Caco-2 (cell line): ENCODE measurements at regions of chr3 and their contacts with region 1.

Region 1: GRCh38 chr3:156151824-156152428 is 31.5 kb downstream of the KCNAB1 start:
- DNase-seq: peak; percentile 65 to 66
- H3K4me3 ChIP-seq: no peak overlapping the region
- H3K4me3 Mint-ChIP-seq: no peak overlapping the region
- H3K27ac Mint-ChIP-seq: no peak overlapping the region
- H3K4me1 ChIP-seq: no peaks in the 10 kb centered on the region
- H3K4me1 Mint-ChIP-seq: peaks cover 8% of the 10 kb centered on the region
- H3K27me3 ChIP-seq: no peaks in the 10 kb centered on the region
- H3K27me3 Mint-ChIP-seq: no peaks in the 10 kb centered on the region
- CTCF ChIP-seq: peak; percentile 66 to 84

Region 2: DNA sequence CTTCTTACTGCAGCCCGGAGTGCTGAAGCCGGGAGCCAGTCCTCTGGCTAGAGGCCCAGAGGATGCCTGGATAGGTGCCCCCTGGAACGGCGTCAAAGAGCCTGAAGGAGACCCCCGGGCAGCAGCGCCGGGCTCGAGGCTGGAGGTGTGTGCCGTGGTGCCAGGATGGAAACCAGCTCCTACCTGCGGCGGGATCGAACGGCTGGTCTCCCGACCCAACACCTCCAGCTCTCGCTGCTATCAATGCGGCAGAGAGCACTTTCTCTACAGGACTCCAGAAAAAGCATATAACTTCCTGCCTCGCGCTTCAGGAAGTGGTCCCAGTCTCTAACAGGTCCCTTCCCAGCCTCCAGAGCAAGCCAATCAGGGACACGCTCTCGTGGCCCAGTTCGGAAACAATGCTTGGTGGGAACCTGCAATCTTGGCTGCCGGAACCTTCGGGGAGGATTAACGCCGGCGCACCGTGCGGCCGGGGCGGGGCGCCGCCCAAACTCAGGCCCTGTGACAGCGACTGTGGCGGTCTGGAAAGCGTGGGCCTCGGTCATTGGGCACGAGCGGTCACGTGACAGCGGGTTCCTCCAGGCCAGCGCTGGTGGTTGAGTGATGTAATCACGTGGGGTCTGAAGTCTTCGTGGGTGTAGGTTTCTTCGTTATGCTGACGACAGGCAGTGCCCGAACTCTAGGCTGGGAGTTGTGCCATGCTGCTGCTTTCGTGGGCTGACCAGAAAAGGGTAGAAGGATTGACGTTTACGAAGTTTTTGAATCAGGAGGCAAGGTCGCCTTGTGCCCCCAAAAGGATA is 297.6 kb before region 1 on chr3 and contains the start of gene SLC33A1:
- CTCF ChIA-PET with region 1: no interaction called
- POLR2A ChIA-PET with region 1: no interaction called
- intact Hi-C with region 1: no loop called
- DNase-seq: peak; percentile 98 to 99
- H3K4me3 ChIP-seq: peak within 1 kb of the TSS; percentile 95
- H3K4me3 Mint-ChIP-seq: peak within 1 kb of the TSS; percentile 90
- H3K27ac Mint-ChIP-seq: peak within 1 kb of the TSS; percentile 95
- H3K4me1 ChIP-seq: peaks cover 11% of the 10 kb centered on the region; the same call in 1 of the 2 replicates
- H3K4me1 Mint-ChIP-seq: no peaks in the 10 kb centered on the region
- H3K27me3 ChIP-seq: no peaks in the 10 kb centered on the region
- H3K27me3 Mint-ChIP-seq: no peaks in the 10 kb centered on the region
- CTCF ChIP-seq: no peak
- total RNA-seq, gene SLC33A1: 19.6 TPM in 2 replicates

Region 3: GRCh38 chr3:156014489-156014888 is 137.4 kb before region 1 on chr3:
- CTCF ChIA-PET with region 1: no interaction called
- POLR2A ChIA-PET with region 1: no interaction called
- intact Hi-C with region 1: loop called (anchors 1 kb)
- DNase-seq: no peak
- H3K4me3 ChIP-seq: no peak overlapping the region
- H3K4me3 Mint-ChIP-seq: no peak overlapping the region
- H3K27ac Mint-ChIP-seq: no peak overlapping the region
- H3K4me1 ChIP-seq: no peaks in the 10 kb centered on the region
- H3K4me1 Mint-ChIP-seq: no peaks in the 10 kb centered on the region
- H3K27me3 ChIP-seq: no peaks in the 10 kb centered on the region
- H3K27me3 Mint-ChIP-seq: no peaks in the 10 kb centered on the region
- CTCF ChIP-seq: no peak

Region 4: DNA sequence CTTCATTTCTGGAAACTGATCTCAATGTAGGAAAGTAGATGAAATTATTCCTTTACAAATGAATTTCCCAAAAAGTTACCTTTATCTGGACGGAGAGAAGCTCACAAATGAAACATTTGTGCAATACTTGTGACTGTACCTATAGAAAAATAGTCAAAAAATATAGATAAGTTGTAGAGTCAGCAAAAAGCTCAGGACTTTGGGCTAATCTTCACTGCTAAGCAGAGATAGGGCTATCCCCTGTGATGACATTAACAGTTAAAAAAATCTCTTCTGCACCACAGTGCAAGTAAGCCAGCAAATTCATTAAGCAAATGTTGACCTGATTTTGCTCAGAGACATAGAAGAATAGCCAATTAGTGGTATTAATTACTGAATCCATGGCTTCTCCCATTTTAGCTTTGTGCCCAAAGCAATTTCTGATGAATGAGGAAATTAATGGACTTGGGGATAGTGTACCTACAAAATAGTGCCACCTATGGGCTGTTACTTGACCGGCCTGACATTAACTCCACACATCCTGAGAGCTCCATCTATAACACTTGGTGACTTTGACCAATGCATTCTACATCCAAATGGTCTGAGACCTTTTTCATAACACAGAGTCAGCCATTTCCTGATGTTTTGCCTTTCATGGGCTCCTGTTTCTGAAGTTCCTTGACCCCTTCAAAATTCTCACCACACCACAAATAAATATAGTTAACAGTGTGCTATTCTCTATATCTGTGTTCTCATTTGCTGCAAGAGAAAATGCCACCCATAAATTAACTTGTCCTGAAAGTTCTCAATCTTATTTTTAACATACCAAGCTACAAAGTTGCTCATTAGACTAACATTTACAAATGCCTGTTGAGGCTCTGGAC is 298.0 kb after region 1 on chr3:
- CTCF ChIA-PET with region 1: interaction called, 7 read pairs
- POLR2A ChIA-PET with region 1: no interaction called
- intact Hi-C with region 1: loop called (anchors 1 kb)
- DNase-seq: peak in 1 of 2 experiments; percentile 30
- H3K4me3 ChIP-seq: no peak overlapping the region
- H3K4me3 Mint-ChIP-seq: no peak overlapping the region
- H3K27ac Mint-ChIP-seq: no peak overlapping the region
- H3K4me1 ChIP-seq: no peaks in the 10 kb centered on the region
- H3K4me1 Mint-ChIP-seq: no peaks in the 10 kb centered on the region
- H3K27me3 ChIP-seq: no peaks in the 10 kb centered on the region
- H3K27me3 Mint-ChIP-seq: peaks cover 6% of the 10 kb centered on the region
- CTCF ChIP-seq: peak; percentile 35 to 68

Region 5: DNA sequence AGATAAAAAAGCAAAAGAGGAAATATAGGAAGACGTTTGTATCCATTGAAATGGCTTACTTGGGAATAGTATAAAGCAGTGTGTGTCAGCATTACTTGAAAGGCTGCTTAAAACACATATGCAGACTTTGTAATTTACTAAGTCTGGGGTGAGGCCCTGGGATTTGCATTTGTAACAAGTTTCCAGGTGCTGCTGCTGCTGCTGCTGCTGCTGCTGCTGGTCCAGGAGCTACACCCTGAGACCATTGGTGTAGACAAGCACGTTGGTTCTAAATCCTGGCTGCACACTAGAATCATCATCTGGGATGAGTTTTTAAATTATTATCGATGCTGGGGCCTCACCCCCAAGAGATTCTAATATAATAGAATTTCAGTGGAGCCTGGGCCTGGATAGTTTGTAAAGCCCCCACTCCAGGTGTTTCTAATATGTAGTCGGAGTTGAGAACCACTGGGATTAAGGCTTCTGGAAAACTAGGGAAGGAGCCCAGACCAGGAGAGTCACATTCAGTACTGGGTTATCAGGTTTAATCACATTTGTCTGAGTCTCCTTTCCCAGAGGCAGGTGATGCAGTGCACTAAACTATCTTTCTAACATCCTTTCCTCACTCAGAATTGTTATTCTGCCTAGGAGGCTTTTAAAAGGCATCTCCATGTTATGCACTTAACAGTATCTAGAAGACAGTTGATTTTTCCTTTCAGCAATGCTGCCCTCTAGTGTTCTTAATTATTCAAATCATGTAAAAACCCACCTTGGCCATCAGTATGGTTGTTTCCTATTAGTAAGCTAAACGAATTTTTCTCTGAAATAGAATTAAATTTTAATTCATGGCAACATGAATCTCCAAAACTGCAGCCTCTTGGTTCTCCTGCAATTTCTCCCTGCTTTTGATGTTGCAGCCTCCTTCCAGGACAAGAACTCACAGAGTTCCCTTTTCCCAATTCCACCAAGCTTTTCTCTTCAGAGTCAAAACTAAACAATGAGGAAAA is 357.6 kb after region 1 on chr3:
- CTCF ChIA-PET with region 1: interaction called, 19 read pairs
- POLR2A ChIA-PET with region 1: no interaction called
- intact Hi-C with region 1: loop called (anchors 1 kb)
- DNase-seq: peak in 1 of 2 experiments; percentile 42
- H3K4me3 ChIP-seq: no peak overlapping the region
- H3K4me3 Mint-ChIP-seq: no peak overlapping the region
- H3K27ac Mint-ChIP-seq: no peak overlapping the region
- H3K4me1 ChIP-seq: 0 out of 2 replicates have a peak, but pooled peaks cover 5% of the 10 kb centered on the region
- H3K4me1 Mint-ChIP-seq: no peaks in the 10 kb centered on the region
- H3K27me3 ChIP-seq: no peaks in the 10 kb centered on the region; the same call in 1 of the 2 replicates
- H3K27me3 Mint-ChIP-seq: peaks cover 12% of the 10 kb centered on the region
- CTCF ChIP-seq: peak; percentile 53 to 64

Region 6: DNA sequence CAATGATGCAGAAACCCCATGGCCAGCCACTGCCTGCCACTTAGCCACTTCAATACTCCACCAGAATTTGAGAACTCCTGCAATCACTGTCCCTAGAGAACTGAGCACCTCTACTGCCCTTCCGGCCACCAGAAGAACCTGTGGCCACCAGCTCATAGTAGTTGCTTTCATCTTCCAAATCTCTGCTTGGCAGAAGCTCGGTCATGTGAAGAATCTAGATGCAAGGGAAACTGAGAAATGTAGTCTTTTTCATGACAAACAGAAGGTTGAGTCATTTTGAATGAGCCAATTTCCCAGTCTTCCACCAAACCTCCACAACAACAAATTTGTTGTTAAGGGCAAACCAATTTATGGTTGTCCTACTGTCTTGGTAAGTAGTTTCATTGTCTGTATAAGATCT is 430.9 kb after region 1 on chr3:
- CTCF ChIA-PET with region 1: no interaction called
- POLR2A ChIA-PET with region 1: no interaction called
- intact Hi-C with region 1: no loop called
- DNase-seq: no peak
- H3K4me3 ChIP-seq: no peak overlapping the region
- H3K4me3 Mint-ChIP-seq: no peak overlapping the region
- H3K27ac Mint-ChIP-seq: no peak overlapping the region
- H3K4me1 ChIP-seq: 0 out of 2 replicates have a peak, but pooled peaks cover 4% of the 10 kb centered on the region
- H3K4me1 Mint-ChIP-seq: no peaks in the 10 kb centered on the region
- H3K27me3 ChIP-seq: no peaks in the 10 kb centered on the region
- H3K27me3 Mint-ChIP-seq: peaks cover 4% of the 10 kb centered on the region
- CTCF ChIP-seq: no peak

Region 7: DNA sequence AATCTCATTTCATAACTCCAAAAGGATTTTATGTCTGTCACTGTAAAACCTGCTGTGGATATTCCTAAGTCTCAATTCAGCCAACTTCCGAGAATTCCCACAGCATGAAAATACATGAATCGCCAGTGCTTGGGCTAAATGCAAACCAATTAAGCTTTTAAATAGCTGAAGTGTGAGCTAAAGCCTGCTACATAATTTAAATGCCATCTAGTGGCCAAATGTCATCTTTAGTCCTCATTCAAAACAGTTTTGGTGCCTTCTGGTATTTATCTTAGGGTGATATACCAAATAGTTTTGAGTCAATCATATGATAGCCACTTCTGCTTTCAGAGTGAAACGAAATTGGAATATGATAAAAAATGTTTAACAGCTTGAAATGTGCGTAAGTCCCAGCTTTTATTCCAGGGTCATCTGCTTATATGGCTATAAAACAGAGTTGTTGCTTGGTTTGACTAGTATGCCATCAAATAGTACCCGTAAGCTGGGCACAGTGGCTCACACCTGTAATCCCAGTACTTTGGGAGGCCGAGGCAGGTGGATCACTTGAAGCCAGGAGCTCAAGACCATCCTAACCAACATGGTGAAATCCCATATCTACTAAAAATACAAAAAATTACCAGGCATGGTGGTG is 1049.8 kb after region 1 on chr3:
- CTCF ChIA-PET with region 1: no interaction called
- POLR2A ChIA-PET with region 1: no interaction called
- intact Hi-C with region 1: loop called (anchors 2 kb)
- DNase-seq: peak in 1 of 2 experiments; percentile 10
- H3K4me3 ChIP-seq: no peak overlapping the region
- H3K4me3 Mint-ChIP-seq: no peak overlapping the region
- H3K27ac Mint-ChIP-seq: no peak overlapping the region
- H3K4me1 ChIP-seq: no peaks in the 10 kb centered on the region
- H3K4me1 Mint-ChIP-seq: no peaks in the 10 kb centered on the region
- H3K27me3 ChIP-seq: no peaks in the 10 kb centered on the region
- H3K27me3 Mint-ChIP-seq: no peaks in the 10 kb centered on the region
- CTCF ChIP-seq: peak; percentile 45 to 55